HAP-1 (cell line): ENCODE measurements at regions of chr20 and their contacts with region 1.

Region 1: GRCh38 chr20:58246346-58246745 is 17.9 kb upstream of the ANKRD60 start:
- DNase-seq: peak; percentile 4 to 16
- H3K4me3 ChIP-seq: no peak overlapping the region
- H3K4me1 ChIP-seq: no peaks in the 10 kb centered on the region
- H3K27me3 ChIP-seq: no peaks in the 10 kb centered on the region

Region 2: GRCh38 chr20:57788001-57788781 is 458.2 kb before region 1 on chr20:
- in situ Hi-C with region 1: no loop called
- DNase-seq: no peak
- H3K4me3 ChIP-seq: no peak overlapping the region
- H3K4me1 ChIP-seq: no peaks in the 10 kb centered on the region
- H3K27me3 ChIP-seq: no peaks in the 10 kb centered on the region

Region 3: DNA sequence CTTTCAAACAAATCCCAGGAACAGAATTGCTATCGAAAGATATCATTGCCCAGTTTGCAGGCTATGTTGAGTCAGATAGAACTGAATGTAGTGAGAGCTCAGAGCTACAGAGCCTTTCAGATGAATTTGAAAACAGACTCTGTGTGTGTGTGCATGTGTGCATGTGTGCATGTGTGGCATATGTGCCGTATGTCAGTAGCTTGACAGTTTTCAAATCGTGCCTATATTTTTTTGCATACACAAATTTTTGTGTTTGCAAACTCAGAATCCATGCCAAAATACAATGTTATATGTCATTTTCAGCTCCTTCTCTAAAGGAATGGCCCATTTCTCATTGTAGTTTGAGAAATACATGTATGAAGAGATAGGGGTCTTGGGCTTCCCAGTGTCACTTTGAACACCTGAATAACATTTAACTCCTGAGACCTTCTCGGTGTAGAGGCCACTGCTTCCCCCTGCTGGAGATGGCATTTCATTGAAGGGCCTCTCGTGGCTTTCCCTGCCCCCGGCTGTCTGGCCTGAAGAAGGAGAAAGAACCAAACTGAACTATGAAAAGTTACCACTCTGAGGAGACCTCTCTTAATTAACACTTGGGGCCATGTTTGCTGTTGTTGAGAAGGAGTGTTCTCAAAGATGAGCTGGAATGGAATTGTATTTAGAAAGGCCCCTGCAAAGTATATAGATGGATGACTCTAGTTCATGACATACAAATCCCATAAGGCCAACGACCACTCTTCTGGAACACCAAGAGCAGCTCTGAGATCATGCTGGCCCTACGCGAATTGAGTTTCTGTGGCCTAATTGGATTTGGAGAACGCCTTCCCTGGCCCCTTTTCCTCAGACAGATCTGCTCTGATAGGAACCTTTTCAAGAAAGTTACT is 201.4 kb after region 1 on chr20:
- in situ Hi-C with region 1: loop called (anchors 10 kb)
- DNase-seq: peak in 1 of 2 experiments; percentile 68
- H3K4me3 ChIP-seq: no peak overlapping the region
- H3K4me1 ChIP-seq: no peaks in the 10 kb centered on the region
- H3K27me3 ChIP-seq: no peaks in the 10 kb centered on the region

Region 4: DNA sequence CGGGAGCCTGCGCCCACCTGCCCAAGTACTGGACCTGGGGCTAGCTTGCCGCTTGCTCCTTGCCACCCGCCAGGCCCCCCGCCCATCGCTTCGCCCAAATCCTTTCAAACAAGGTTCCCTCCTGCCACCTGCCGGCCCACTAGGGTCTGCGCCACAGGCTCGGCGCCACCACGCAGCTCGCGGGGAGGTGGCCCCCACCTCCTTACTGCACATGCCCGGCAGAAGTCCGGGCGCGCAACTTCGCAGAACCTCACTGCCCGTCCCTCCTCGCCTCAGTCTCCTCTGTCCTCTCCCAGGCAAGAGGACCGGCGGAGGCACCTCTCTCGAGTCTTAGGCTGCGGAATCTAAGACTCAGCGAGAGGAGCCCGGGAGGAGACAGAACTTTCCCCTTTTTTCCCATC is 593.1 kb after region 1 on chr20:
- in situ Hi-C with region 1: loop called (anchors 10 kb)
- DNase-seq: peak; percentile 49 to 86
- H3K4me3 ChIP-seq: 0 out of 2 replicates have a peak overlapping the region, but pooled peaks have one; percentile 8
- H3K4me1 ChIP-seq: no peaks in the 10 kb centered on the region
- H3K27me3 ChIP-seq: peaks cover 51% of the 10 kb centered on the region